Common myeloid progenitor, CD34-positive (primary cell): ENCODE measurements at regions of chr7 and their contacts with region 1.

Region 1: DNA sequence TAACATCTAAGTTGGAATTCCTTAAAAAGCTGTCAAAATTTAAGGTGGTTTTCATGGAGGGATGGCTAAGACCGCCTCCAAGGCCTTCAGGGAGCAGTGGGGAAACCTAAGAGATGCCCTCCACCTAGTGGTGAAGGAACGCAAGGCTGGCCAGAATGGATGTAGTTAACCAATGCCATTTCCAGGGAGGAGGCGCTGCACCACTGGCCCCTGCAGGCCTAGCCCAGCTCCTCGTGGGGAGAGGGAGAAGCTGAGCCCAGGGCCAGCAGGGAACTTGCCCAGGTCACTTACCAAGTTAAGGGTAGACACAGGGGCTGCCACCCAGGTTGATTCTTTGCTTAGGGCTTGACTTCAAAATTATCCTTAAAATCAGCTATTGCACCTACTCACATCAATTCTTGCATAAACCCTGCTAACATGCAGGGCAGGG is 32.0 kb downstream of the FIGNL1 start:
- DNase-seq: peak; percentile 79 to 84 (median 83)
- H3K4me3 ChIP-seq: no peak overlapping the region
- H3K27ac ChIP-seq: no peak overlapping the region
- H3K4me1 ChIP-seq: peaks cover 7 to 29% (median 15%) of the 10 kb centered on the region in 4 experiments
- H3K27me3 ChIP-seq: no peaks in the 10 kb centered on the region

Region 2: DNA sequence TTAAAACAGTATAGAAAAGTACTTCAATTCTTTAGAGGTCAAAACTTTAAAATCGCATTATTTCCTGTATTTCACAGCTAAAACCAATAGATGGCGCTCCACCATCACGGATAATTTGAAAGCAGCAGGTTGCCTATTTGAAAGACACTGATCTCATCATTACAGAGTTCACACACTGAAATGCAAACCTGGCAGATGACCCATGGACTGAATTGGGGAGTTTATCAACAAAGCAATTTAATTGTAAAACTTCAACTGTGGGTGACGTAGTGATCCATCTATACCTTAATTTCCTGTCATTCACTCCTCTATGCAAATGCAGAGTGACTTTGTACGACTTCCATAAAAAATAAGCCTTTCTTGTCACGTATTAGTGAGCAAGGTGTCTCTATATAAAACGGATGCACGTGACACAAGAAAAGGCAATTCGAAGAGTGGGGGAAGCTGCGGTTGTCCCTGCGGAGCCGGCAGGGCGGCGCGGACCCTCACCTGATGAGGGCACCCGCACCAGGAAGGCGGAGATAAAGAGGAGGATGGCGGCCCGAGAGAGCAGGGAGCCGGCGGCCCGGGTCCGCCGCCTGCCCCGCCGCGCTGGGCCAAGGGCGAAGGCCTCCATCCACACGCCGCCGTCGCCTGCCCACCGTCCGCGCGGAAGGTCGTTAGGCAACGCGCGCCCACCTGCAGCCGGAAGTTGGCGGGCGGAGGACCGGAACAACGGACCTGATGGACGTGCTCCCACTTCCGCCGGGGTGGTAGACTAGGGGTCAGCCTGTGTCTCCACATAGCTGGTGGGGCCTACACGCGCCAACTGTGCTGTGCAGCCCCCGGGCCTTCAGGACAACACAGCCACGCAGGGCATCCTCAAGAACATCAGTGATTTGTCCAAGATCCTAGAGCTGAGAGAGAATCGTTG is 325.3 kb before region 1 on chr7 and contains the start of gene ZPBP:
- CTCF ChIA-PET with region 1: interaction called, 24 read pairs
- POLR2A ChIA-PET with region 1: no interaction called
- DNase-seq: peak; percentile 68 to 84 (median 78)
- H3K4me3 ChIP-seq: peak within 1 kb of the TSS; percentile 11 to 86 (median 76)
- H3K27ac ChIP-seq: peak within 1 kb of the TSS in 1 of 2 experiments; percentile 22
- H3K4me1 ChIP-seq: peaks cover 3 to 9% (median 6%) of the 10 kb centered on the region in 4 experiments
- H3K27me3 ChIP-seq: no peaks in the 10 kb centered on the region

Region 3: GRCh38 chr7:50119815-50120637 is 298.1 kb before region 1 on chr7:
- CTCF ChIA-PET with region 1: interaction called, 30 read pairs
- POLR2A ChIA-PET with region 1: no interaction called
- DNase-seq: peak; percentile 50 to 75 (median 72)
- H3K4me3 ChIP-seq: no peak overlapping the region
- H3K27ac ChIP-seq: no peak overlapping the region
- H3K4me1 ChIP-seq: peaks cover 0 to 4% (median 0%) of the 10 kb centered on the region in 4 experiments
- H3K27me3 ChIP-seq: no peaks in the 10 kb centered on the region

Region 4: GRCh38 chr7:50142425-50143017 is 275.6 kb before region 1 on chr7:
- CTCF ChIA-PET with region 1: interaction called, 23 read pairs
- POLR2A ChIA-PET with region 1: no interaction called
- DNase-seq: peak; percentile 65 to 84 (median 76)
- H3K4me3 ChIP-seq: peak overlapping the region in 1 of 7 experiments; percentile 44
- H3K27ac ChIP-seq: no peak overlapping the region
- H3K4me1 ChIP-seq: peaks cover 2 to 22% (median 12%) of the 10 kb centered on the region in 4 experiments
- H3K27me3 ChIP-seq: no peaks in the 10 kb centered on the region

Region 5: GRCh38 chr7:50406935-50407538 is 11.1 kb before region 1 on chr7:
- CTCF ChIA-PET with region 1: interaction called, 18 read pairs
- POLR2A ChIA-PET with region 1: no interaction called
- DNase-seq: no peak
- H3K4me3 ChIP-seq: no peak overlapping the region
- H3K27ac ChIP-seq: no peak overlapping the region
- H3K4me1 ChIP-seq: peaks cover 7 to 29% (median 20%) of the 10 kb centered on the region in 4 experiments
- H3K27me3 ChIP-seq: no peaks in the 10 kb centered on the region

Region 6: DNA sequence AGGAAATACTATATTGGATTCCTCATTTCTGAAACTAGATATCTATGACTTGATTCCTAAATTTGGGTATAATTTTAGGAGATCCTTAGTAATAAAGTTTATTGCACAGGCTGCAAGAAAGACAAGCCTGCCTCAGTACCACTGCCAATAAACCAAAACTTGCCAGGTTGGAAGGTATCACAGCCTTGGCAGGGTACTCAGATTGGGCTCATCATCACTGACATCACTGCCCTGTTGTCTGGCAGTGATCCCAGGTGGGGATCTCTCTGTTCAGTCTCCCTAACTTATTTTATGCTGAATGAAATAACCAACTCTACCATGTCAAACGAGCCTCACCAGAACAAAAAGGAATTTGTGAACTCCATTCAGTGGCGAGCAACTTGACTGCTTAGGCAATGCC is 13.2 kb after region 1 on chr7:
- CTCF ChIA-PET with region 1: interaction called, 47 read pairs
- POLR2A ChIA-PET with region 1: no interaction called
- DNase-seq: no peak
- H3K4me3 ChIP-seq: no peak overlapping the region
- H3K27ac ChIP-seq: no peak overlapping the region
- H3K4me1 ChIP-seq: no peaks in the 10 kb centered on the region
- H3K27me3 ChIP-seq: no peaks in the 10 kb centered on the region

Region 7: GRCh38 chr7:50679218-50680007 is 261.3 kb after region 1 on chr7:
- CTCF ChIA-PET with region 1: interaction called, 15 read pairs
- POLR2A ChIA-PET with region 1: no interaction called
- DNase-seq: peak; percentile 54 to 73 (median 70)
- H3K4me3 ChIP-seq: no peak overlapping the region
- H3K27ac ChIP-seq: no peak overlapping the region
- H3K4me1 ChIP-seq: peaks cover 2 to 22% (median 18%) of the 10 kb centered on the region in 4 experiments
- H3K27me3 ChIP-seq: no peaks in the 10 kb centered on the region